ENCODE measurements at regions of chr12 and their contacts with region 1.

Region 1: DNA sequence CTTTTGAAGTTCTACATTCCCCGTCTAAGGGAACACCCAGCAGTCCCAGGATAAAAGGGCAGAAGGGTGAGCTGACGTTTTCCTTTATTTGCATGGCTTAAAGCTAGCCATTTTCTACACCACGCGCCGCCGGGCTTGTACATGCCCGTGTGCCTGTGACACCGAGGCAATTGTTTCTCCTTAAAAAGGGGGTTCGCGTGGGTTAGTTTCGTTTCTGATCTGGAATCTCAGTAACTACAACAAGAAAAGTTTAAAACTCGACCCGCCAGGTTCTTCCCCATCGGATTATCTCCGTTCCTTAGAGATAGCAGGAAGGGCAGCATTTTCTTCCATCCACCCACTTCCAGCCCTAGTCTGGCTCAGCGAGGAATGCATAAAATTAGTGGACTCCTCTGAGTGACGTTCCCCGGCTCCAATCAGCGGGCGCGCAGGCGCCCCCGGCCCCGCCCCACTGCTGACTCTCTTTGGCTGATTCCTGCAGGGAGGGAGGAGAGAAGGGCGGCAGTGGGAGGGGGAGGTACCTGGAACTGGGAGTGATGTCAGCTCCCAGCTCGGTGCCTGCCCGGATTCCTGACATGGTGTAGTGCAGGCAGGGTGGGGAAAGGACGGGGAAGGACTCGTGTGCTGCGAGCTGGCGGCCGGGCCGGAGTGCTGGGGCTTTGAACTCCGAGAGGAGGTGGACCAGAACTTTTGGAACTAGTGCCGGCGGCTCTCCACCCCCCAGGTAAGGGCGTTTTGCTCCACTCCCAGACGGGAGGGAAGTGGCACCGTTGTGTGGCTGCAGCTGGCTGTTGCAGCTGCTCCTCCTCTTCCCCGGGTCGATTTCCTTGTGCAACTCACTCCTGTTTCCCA is at the start of gene PPFIBP1:
- DNase-seq: peak; percentile 99 to 100
- H3K4me3 ChIP-seq: peak within 1 kb of the TSS; percentile 78 to 84
- H3K27ac ChIP-seq: peak within 1 kb of the TSS; percentile 85 to 91
- H3K4me1 ChIP-seq: peaks cover 0 to 31% (median 7%) of the 10 kb centered on the region in 4 donors
- H3K27me3 ChIP-seq: no peaks in the 10 kb centered on the region
- CTCF ChIP-seq: peak; percentile 31 to 32

Region 2: GRCh38 chr12:27179400-27180214 is 344.3 kb before region 1 on chr12:
- intact Hi-C with region 1: loop called (anchors 10 kb)
- DNase-seq: no peak
- H3K4me3 ChIP-seq: peak overlapping the region in 1 of 2 donors; percentile 8
- H3K27ac ChIP-seq: peak overlapping the region; percentile 63 to 84
- H3K4me1 ChIP-seq: peaks cover 0 to 74% (median 23%) of the 10 kb centered on the region in 4 donors
- H3K27me3 ChIP-seq: no peaks in the 10 kb centered on the region
- CTCF ChIP-seq: no peak

Region 3: DNA sequence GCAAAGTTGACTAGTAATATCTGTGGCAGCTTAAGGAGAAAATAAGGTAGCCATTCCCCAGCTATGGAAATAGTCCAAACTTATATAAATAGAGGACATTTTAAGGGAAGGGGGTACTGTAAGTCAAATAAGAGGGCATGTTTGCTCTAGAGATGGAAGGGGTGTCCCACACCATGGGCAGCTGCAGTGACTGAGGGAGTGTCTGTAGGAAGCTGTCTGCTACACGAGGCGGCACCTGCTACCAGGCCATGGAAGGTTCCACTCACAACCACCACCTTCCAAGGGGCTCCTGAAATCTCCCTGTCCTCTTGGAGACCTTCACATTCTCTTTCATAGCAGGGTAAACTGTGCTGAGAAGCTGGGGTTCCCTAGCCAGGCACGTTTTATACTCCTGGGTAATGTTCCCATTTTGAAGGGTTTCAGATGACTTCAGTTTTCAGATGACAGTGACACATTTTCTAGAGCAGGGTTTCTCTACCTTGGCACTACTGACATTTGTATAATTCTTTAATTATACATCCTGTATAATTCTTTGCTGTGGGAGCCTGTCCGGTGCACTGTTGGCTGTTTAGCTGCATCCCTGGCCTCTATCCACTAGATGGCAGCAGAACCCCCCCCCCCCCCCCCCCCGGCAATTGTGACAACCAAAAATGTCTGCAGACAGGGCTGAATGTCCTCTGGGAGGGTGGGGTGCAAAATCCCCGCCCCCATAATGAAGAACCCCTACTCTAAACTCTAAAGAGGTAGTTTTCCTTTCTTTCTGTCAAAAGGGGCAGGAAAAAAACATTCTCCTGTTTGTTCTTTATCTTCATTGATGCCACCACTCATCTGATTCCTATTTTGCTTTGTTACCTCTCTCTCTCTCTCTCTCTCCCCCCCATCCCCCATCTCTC is 88.9 kb before region 1 on chr12:
- intact Hi-C with region 1: loop called (anchors 10 kb)
- DNase-seq: no peak
- H3K4me3 ChIP-seq: no peak overlapping the region
- H3K27ac ChIP-seq: no peak overlapping the region
- H3K4me1 ChIP-seq: peaks cover 0 to 8% (median 3%) of the 10 kb centered on the region in 4 donors
- H3K27me3 ChIP-seq: no peaks in the 10 kb centered on the region
- CTCF ChIP-seq: peak; percentile 34 to 36

Region 4: DNA sequence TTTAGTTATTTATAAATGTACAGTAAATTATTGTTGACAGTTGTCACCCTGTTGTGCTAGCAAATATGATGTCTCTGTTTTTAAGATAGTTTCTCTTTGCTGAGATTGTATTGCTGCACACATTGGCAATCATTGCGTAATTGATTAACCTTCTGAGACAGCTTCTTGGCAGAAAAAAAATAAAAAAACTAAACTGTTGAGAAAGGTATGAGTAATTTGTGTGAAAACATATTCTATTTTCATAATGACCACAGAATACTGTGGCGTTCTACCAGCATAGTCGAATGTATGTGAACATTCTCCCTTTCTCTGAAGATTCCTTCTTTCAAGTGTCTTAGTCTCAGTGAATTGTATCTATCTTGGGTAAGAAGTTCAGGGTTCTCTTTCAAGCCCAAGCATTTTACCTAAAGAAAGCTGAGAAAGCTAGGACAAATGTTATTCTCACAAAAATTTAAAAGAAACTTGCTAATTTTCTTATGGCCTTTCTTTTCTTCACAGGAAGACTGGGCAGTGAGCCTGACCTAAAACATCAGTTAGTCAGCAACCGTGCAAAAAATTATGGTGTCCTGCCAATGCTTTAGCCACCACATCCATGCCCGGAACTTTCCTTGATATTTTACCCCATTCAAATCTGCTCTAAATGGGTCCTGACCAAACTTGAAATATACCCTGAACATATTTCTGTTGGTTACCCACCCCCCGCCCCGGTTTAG is 103.4 kb after region 1 on chr12:
- intact Hi-C with region 1: loop called (anchors 10 kb)
- DNase-seq: peak; percentile 49 to 68
- H3K4me3 ChIP-seq: no peak overlapping the region
- H3K27ac ChIP-seq: peak overlapping the region; percentile 62 to 74
- H3K4me1 ChIP-seq: peaks cover 0 to 53% (median 25%) of the 10 kb centered on the region in 4 donors
- H3K27me3 ChIP-seq: no peaks in the 10 kb centered on the region
- CTCF ChIP-seq: peak in 1 of 2 experiments; percentile 11

Region 5: GRCh38 chr12:28622406-28622805 is 1098.5 kb after region 1 on chr12:
- intact Hi-C with region 1: no loop called
- DNase-seq: no peak
- H3K4me3 ChIP-seq: no peak overlapping the region
- H3K27ac ChIP-seq: no peak overlapping the region
- H3K4me1 ChIP-seq: no peaks in the 10 kb centered on the region
- H3K27me3 ChIP-seq: no peaks in the 10 kb centered on the region
- CTCF ChIP-seq: no peak

Measured in tibial artery (tissue), 4 donors.